Mammary epithelial cell (primary cell): ENCODE measurements at regions of chr12 and their contacts with region 1.

Region 1: GRCh38 chr12:3275171-3276041 is 198.2 kb downstream of the TSPAN9 start:
- DNase-seq: peak; percentile 32
- H3K4me3 ChIP-seq: no peak overlapping the region
- H3K27ac ChIP-seq: no peak overlapping the region
- H3K4me1 ChIP-seq: peaks cover 9% of the 10 kb centered on the region
- H3K27me3 ChIP-seq: no peaks in the 10 kb centered on the region
- CTCF ChIP-seq: peak; percentile 93 to 99

Region 2: DNA sequence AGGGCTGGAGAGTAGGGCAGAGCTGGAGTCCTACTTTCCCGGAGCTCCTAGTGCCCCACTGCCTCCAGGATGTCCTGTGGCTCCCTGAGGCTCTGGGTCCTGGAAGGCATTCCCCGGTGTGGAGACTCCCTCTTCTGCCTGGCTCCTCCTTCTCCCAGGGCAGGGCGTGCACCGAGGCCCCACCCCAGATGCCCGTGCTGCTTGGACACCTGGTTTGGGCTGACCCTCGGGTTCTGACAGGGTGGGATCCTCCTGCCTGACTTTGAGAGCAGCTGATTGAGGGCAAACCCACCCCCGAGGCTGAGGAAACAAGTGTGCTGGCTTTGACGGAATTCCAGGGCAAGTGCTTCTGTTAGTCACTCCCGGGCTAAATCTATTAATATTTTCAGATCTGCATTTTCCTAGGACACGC is 300.8 kb before region 1 on chr12:
- CTCF ChIA-PET with region 1: no interaction called
- dilution Hi-C with region 1: no loop called
- in situ Hi-C with region 1: no loop called
- intact Hi-C with region 1: no loop called
- DNase-seq: no peak
- H3K4me3 ChIP-seq: no peak overlapping the region
- H3K27ac ChIP-seq: no peak overlapping the region
- H3K4me1 ChIP-seq: no peaks in the 10 kb centered on the region
- H3K27me3 ChIP-seq: no peaks in the 10 kb centered on the region
- CTCF ChIP-seq: no peak

Region 3: GRCh38 chr12:3073438-3074250 is 201.8 kb before region 1 on chr12:
- CTCF ChIA-PET with region 1: interaction called, 6 read pairs
- dilution Hi-C with region 1: loop called (anchors 5 kb)
- in situ Hi-C with region 1: loop called (anchors 10 kb)
- intact Hi-C with region 1: loop called (anchors 1 kb)
- DNase-seq: peak; percentile 65
- H3K4me3 ChIP-seq: no peak overlapping the region
- H3K27ac ChIP-seq: no peak overlapping the region
- H3K4me1 ChIP-seq: peaks cover 18% of the 10 kb centered on the region
- H3K27me3 ChIP-seq: no peaks in the 10 kb centered on the region
- CTCF ChIP-seq: peak; percentile 99 to 100

Region 4: DNA sequence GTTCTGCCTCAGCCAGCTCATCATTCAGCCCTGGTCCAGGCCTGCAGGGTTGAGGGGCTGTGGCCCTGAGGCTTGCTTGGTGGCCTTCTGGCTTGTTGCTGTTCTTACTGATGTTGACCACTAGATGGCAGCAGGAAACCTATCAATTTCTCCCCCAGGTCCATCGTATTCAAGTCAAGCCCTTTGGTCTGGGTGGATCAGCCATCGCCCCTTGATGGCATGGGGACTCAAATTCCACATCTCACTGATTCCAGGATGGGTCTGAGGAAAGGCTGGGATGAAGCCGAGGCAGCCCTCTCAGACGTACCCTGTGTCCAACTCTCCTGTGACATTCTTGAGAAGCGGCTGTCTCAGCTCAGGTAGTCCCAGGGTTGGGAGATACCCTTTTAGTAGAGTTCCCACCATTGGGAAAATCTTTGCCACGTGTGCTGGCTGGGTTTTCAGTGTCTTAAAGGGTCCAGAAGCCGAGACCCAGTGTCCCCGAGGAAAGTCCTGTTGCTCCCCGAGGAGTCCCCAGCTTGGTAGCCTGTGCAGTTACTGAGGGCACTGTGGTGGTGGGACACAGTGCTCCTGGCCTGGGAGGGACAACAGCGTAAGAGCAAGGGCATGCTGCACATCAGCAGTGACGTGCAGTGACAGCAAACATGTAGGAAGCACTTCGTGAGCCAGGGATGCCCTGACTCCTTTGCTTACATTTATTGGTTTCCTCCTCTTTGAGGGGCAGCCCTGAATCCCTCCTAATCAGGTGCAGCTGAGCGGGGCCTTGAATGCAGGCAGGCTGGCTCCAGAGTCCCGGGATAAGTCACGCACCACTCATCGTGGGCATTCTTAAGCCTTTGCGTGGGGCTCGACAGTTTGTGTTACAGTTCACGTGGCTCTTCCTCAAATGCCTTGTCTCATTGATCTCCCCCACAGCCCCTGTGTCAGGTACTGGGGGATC is 139.6 kb before region 1 on chr12:
- CTCF ChIA-PET with region 1: no interaction called
- dilution Hi-C with region 1: loop called (anchors 5 kb)
- in situ Hi-C with region 1: loop called (anchors 5 kb)
- intact Hi-C with region 1: loop called (anchors 1 kb)
- DNase-seq: peak; percentile 51
- H3K4me3 ChIP-seq: no peak overlapping the region
- H3K27ac ChIP-seq: no peak overlapping the region
- H3K4me1 ChIP-seq: peaks cover 2% of the 10 kb centered on the region
- H3K27me3 ChIP-seq: no peaks in the 10 kb centered on the region
- CTCF ChIP-seq: peak; percentile 66 to 79

Region 5: GRCh38 chr12:3202734-3203446 is 72.5 kb before region 1 on chr12:
- CTCF ChIA-PET with region 1: no interaction called
- dilution Hi-C with region 1: no loop called
- in situ Hi-C with region 1: no loop called
- intact Hi-C with region 1: loop called (anchors 2 kb)
- DNase-seq: peak; percentile 23
- H3K4me3 ChIP-seq: no peak overlapping the region
- H3K27ac ChIP-seq: no peak overlapping the region
- H3K4me1 ChIP-seq: peaks cover 18% of the 10 kb centered on the region
- H3K27me3 ChIP-seq: no peaks in the 10 kb centered on the region
- CTCF ChIP-seq: peak; percentile 95 to 96

Region 6: DNA sequence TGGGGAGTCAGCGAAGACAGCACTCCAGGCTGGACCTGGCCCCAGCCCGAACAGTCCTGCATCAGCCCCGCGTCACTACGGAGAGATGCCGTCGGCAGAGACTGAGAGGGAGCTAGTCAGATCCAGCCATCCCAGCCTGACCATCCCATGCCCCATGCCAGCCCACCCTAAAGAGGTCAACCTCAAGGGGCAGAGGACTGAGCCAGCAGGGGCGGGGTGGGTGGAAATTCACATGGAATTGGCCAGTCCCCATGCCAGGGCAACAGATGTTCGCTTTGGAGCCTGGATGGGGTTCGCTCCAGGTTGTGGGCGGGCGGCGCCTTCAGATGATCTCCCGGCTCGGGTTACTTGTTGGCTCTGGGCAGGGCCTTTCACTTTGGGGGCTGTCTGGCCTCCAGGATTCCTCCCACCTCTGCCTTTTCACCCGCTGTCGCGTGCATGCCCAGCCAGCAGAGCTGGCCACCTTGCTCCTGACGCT is 44.0 kb before region 1 on chr12:
- CTCF ChIA-PET with region 1: no interaction called
- dilution Hi-C with region 1: loop called (anchors 5 kb)
- in situ Hi-C with region 1: no loop called
- intact Hi-C with region 1: no loop called
- DNase-seq: no peak
- H3K4me3 ChIP-seq: no peak overlapping the region
- H3K27ac ChIP-seq: no peak overlapping the region
- H3K4me1 ChIP-seq: no peaks in the 10 kb centered on the region
- H3K27me3 ChIP-seq: no peaks in the 10 kb centered on the region
- CTCF ChIP-seq: no peak

Region 7: GRCh38 chr12:4685317-4685716 is 1409.9 kb after region 1 on chr12:
- CTCF ChIA-PET with region 1: no interaction called
- dilution Hi-C with region 1: no loop called
- in situ Hi-C with region 1: no loop called
- intact Hi-C with region 1: no loop called
- DNase-seq: no peak
- H3K4me3 ChIP-seq: no peak overlapping the region
- H3K27ac ChIP-seq: no peak overlapping the region
- H3K4me1 ChIP-seq: no peaks in the 10 kb centered on the region
- H3K27me3 ChIP-seq: no peaks in the 10 kb centered on the region
- CTCF ChIP-seq: no peak